MCF 10A (cell line): ENCODE measurements at regions of chr10 and their contacts with region 1.

Region 1: DNA sequence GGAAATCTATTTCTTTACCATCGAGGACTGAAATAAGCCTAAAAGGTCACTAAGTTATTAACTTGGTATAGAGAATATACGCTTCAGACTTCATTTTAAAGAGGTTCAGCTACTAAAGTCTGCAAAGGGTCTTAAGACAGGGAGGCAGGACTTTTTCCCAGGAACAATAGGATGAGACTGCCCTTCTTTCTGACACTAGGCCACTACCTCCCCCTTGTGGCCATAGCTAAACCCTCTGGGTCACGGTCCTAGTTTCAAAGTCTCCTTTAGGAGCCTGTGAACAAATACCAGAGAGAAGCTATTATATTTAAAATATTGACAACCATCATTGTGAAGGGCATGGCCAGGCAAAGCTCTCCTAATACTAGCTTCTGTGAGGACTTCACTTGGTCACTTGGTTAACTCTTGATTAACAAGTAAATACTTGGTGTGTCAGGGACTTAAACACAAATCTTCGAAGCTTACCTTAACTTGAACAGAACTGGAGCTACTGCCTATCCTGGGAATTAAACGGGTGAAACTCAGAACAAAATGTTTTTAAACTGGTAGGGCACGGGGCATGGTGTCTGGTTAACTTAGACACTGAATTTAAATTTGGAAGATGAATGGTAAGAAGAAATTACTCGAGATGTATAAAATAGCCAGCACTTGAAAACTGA is 75.6 kb downstream of the CCDC6 start:
- DNase-seq: peak; percentile 65
- H3K4me3 Mint-ChIP-seq: no peak overlapping the region
- H3K27ac Mint-ChIP-seq: no peak overlapping the region
- H3K4me1 Mint-ChIP-seq: no peaks in the 10 kb centered on the region
- H3K27me3 Mint-ChIP-seq: no peaks in the 10 kb centered on the region
- CTCF ChIP-seq: peak; percentile 70

Region 2: DNA sequence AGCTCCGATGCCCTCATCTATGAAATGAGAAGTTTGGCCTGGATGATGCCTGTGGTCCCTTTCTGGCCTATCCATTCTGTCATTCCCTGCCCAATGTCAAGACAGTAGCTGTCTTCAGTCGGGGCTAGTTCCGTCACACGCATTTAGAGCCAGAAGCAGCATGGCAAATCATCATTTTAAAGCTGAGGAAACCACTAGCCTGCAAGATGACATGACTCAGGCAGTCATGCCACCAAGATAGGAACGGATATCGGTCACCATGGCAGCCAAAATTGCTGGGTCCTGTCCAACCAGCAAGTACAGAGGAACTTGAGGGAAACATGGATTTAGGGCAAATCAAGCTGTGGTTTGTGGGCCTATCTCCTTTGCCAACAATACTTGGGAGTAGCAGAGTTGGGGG is 13.0 kb before region 1 on chr10:
- CTCF ChIA-PET with region 1: interaction called, 12 read pairs
- POLR2A ChIA-PET with region 1: no interaction called
- intact Hi-C with region 1: no loop called
- DNase-seq: no peak
- H3K4me3 Mint-ChIP-seq: no peak overlapping the region
- H3K27ac Mint-ChIP-seq: no peak overlapping the region
- H3K4me1 Mint-ChIP-seq: peaks cover 5% of the 10 kb centered on the region
- H3K27me3 Mint-ChIP-seq: no peaks in the 10 kb centered on the region
- CTCF ChIP-seq: no peak

Region 3: GRCh38 chr10:59847326-59847725 is 16.6 kb after region 1 on chr10:
- CTCF ChIA-PET with region 1: interaction called, 23 read pairs
- POLR2A ChIA-PET with region 1: interaction called, 3 read pairs
- intact Hi-C with region 1: no loop called
- DNase-seq: no peak
- H3K4me3 Mint-ChIP-seq: no peak overlapping the region
- H3K27ac Mint-ChIP-seq: no peak overlapping the region
- H3K4me1 Mint-ChIP-seq: no peaks in the 10 kb centered on the region
- H3K27me3 Mint-ChIP-seq: no peaks in the 10 kb centered on the region
- CTCF ChIP-seq: no peak

Region 4: GRCh38 chr10:60257767-60258428 is 427.2 kb after region 1 on chr10:
- CTCF ChIA-PET with region 1: no interaction called
- POLR2A ChIA-PET with region 1: no interaction called
- intact Hi-C with region 1: no loop called
- DNase-seq: no peak
- H3K4me3 Mint-ChIP-seq: no peak overlapping the region
- H3K27ac Mint-ChIP-seq: no peak overlapping the region
- H3K4me1 Mint-ChIP-seq: no peaks in the 10 kb centered on the region
- H3K27me3 Mint-ChIP-seq: no peaks in the 10 kb centered on the region
- CTCF ChIP-seq: no peak